ENCODE measurements at regions of chr2 and their contacts with region 1.

Region 1: GRCh38 chr2:66574701-66575624 is 140.0 kb downstream of the MEIS1 start:
- DNase-seq: peak in 1 of 2 experiments; percentile 64
- H3K4me3 ChIP-seq: peak overlapping the region; percentile 1 to 65 (median 43); a peak in 5 of 8 replicates
- H3K27ac ChIP-seq: no peak overlapping the region
- H3K4me1 ChIP-seq: peaks cover 5 to 29% (median 12%) of the 10 kb centered on the region in 4 experiments
- H3K27me3 ChIP-seq: peaks cover 38 to 46% (median 41%) of the 10 kb centered on the region in 4 experiments
- CTCF ChIP-seq: peak; percentile 52 to 65 (median 62)
- EP300 ChIP-seq: 0 out of 3 replicates have a peak, but pooled peaks of 1 of the 2 experiments have one; percentile 27
- POLR2A ChIP-seq: no peak
- RAD21 ChIP-seq: peak; percentile 86 to 87

Region 2: DNA sequence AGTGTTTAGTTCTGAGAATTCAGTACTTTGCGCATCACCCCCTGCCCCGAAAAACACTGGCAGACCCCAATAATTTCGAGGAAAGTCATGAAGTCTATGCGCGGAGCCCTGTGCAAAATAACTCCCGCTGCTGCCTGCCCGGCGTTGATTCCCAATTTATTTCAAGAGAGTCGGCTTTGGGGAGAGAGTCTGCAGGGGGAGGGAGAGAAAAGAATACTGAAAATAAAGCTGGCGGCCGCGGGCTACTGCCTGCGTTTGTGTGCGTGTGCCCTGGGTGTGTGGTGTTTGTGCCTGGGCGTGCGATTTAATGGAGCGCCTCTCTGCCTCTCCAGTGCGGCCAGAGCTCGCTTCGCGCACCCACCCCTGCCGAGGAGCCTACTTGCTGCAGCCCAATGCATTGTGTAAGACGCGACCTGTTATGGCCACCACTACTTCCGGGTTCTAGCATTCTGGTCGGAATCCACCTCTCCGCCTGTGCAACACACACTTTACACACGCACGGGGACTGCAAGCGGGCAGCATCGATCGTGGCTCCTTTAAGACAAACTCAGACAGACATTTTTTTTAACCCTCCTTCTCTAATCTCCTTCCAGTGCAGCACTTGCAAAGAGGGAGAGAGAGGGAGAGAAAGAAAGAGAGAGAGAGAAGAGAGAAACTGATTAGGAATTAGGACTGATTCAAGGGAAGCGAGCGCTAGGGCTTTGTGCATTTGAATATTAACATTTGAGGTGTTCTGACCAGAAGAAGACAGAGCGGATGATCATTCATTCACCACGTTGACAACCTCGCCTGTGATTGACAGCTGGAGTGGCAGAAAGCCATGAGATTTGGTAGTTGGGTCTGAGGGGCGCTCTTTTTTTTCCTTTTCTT is 140.0 kb before region 1 on chr2 and contains the start of gene MEIS1:
- CTCF ChIA-PET with region 1: interaction called, 161 read pairs
- POLR2A ChIA-PET with region 1: interaction called, 10 read pairs
- DNase-seq: peak in 1 of 2 experiments; percentile 78
- H3K4me3 ChIP-seq: peak within 1 kb of the TSS; percentile 42 to 67 (median 48)
- H3K27ac ChIP-seq: no peak within 1 kb of the TSS
- H3K4me1 ChIP-seq: peaks cover 2 to 31% (median 11%) of the 10 kb centered on the region in 4 experiments
- H3K27me3 ChIP-seq: peaks cover 61 to 100% (median 90%) of the 10 kb centered on the region in 4 experiments
- CTCF ChIP-seq: no peak
- EP300 ChIP-seq: peak in 1 of 2 experiments; percentile 97; a peak in 2 of 3 replicates
- POLR2A ChIP-seq: no peak
- RAD21 ChIP-seq: no peak
- total RNA-seq, gene MEIS1: 0.63 and 1.2 TPM in 2 replicates

Measured in H1 (cell line).